ENCODE measurements at regions of chr17 and their contacts with region 1.

Region 1: DNA sequence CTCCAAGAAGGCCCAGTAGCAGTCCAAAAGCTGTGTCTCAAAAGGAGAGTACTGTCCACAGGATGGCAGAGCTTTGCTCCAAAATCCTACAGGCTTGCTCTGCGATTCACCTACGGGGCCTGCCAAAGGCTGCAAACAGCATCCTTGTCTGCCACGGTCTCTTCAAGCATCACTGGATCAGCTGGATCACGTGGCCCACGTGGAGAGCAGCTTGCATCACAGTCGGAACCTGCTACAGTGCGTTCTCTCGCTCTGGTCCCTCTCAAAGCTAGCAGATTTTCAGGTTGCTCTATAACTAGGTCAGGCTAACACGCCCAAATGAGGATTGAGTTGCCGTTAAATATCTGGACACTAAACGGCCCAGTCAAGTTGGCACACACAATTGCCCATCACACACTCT is 8.4 kb upstream of the TIMM22 start:
- DNase-seq: no peak
- H3K4me3 ChIP-seq: no peak overlapping the region
- H3K4me1 ChIP-seq: no peaks in the 10 kb centered on the region
- H3K27me3 ChIP-seq: no peaks in the 10 kb centered on the region

Region 2: DNA sequence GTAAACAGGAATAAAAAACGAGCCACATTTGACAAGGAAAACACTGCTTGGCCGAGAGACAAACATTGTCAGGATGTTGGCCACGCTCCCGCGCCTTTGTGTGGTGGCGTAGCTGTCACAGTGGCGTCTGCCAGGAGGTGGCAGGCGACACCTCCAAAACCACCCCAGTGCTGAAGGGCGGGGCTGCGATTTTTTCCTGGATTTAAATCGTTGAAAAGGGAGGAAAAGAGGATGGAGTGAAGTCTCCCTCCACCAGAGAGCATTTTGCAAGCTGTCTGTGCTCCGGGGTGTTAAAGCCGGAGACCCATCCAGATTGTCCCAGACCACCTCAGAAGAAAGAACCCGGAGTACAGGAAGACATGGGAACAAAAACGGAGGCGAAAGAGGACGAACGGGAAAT is 193.7 kb before region 1 on chr17:
- in situ Hi-C with region 1: loop called (anchors 5 kb)
- DNase-seq: peak; percentile 58 to 86
- H3K4me3 ChIP-seq: no peak overlapping the region
- H3K4me1 ChIP-seq: peaks cover 5% of the 10 kb centered on the region
- H3K27me3 ChIP-seq: no peaks in the 10 kb centered on the region

Region 3: DNA sequence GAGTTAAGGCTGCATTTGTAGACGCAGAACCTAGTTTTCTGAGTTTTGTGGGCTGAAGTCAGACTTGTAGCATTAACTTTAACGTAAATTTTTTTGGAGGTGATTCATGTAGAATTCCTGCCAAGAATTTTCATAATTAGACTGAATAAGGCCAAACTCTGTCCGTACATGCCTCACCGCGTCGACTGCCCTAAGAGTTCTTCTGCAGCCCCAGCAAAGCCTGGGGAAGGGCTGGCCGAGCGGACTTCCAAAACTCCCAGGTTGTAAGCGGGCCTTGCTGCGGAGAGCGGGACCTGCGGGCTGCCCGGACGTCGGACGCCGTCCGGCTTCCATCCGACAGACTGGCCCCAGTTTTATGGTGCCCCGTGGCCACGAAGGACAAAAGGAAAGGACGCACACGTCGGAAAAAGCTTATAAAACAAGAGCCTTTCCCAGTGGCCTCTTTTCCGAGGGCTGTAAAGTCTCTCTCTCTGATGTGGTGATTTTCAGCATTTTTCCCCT is 84.5 kb before region 1 on chr17:
- in situ Hi-C with region 1: no loop called
- DNase-seq: no peak
- H3K4me3 ChIP-seq: no peak overlapping the region
- H3K4me1 ChIP-seq: no peaks in the 10 kb centered on the region
- H3K27me3 ChIP-seq: no peaks in the 10 kb centered on the region